IMR-90 (cell line): ENCODE measurements at regions of chr1 and their contacts with region 1.

Region 1: DNA sequence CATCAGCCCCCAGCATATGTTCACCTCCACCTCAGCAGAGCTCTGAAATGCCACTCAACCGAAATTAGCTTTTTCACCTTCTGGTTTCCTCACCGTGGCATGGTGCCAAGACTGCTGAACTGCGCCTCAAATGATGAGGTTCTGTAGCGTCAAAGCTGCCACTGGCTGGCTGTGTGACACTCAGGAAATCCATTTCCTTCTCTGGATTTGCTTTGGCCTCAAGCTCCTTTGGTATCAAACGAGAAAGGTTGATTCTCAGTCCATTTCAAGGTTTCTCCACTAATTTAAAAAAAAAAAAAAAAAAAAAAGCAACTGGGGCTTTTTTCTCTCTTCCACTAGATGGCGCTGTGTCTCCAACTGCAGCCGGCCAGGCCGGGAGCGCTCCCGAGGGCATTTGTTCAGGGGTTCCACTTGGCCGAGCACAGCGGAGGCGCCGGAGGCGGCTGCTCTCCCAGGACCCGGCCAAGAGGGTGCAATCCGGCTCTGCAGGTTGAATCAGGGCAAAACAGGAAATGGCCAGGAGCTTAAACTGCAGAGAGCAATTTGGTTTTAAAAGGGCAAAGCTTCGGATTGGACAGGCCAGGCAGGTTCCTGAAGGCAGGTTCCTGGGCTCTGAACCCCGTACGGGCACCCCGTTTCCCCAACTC is 26.5 kb upstream of the PLA2G2C start:
- DNase-seq: peak; percentile 38
- ATAC-seq: peak; percentile 94
- H3K4me3 ChIP-seq: no peak overlapping the region
- H3K27ac ChIP-seq: no peak overlapping the region
- H3K4me1 ChIP-seq: no peaks in the 10 kb centered on the region
- H3K27me3 ChIP-seq: peaks cover 24% of the 10 kb centered on the region
- CTCF ChIP-seq: peak; percentile 78
- POLR2A ChIP-seq: no peak
- RAD21 ChIP-seq: peak; percentile 77

Region 2: GRCh38 chr1:20361806-20362640 is 149.2 kb after region 1 on chr1:
- CTCF ChIA-PET with region 1: interaction called, 3 read pairs
- POLR2A ChIA-PET with region 1: no interaction called
- dilution Hi-C with region 1: no loop called
- in situ Hi-C with region 1: no loop called
- intact Hi-C with region 1: loop called (anchors 5 kb)
- DNase-seq: peak; percentile 37
- ATAC-seq: peak; percentile 62
- H3K4me3 ChIP-seq: no peak overlapping the region
- H3K27ac ChIP-seq: no peak overlapping the region
- H3K4me1 ChIP-seq: peaks cover 11% of the 10 kb centered on the region; the same call in 1 of the 2 replicates
- H3K27me3 ChIP-seq: peaks cover 44% of the 10 kb centered on the region
- CTCF ChIP-seq: peak; percentile 81
- POLR2A ChIP-seq: no peak
- RAD21 ChIP-seq: peak; percentile 86

Region 3: DNA sequence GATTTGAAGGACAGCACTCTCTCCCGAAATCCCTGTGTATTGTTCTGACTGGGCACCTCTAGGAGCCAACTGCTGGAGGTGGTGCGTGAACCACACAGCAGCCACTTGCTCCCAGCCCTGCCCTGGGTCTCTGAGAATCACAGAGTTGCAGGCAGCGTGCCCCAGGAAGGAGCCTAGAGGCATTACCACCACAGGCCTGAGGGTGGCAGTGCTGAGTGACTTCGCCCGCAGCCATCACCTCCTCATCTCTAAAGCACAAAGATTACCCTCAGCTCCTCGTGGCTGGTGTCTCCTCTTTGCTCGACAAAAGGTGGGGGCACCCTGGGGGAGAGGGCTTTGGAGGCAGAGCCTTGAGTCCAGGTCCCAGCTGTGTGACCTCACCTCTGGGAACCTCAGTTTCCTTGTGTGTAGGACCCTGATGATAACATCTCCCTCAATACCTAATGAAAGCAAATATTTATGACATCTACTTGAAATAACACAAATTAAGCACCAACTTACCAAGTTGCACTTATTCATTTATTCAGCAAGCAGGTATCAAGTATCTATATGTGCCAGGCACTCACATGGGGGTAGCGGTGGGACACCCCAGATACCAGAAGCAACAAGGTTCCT is 164.2 kb after region 1 on chr1:
- CTCF ChIA-PET with region 1: no interaction called
- POLR2A ChIA-PET with region 1: no interaction called
- dilution Hi-C with region 1: no loop called
- in situ Hi-C with region 1: no loop called
- intact Hi-C with region 1: loop called (anchors 5 kb)
- DNase-seq: peak; percentile 35
- ATAC-seq: peak; percentile 92
- H3K4me3 ChIP-seq: no peak overlapping the region
- H3K27ac ChIP-seq: no peak overlapping the region
- H3K4me1 ChIP-seq: peaks cover 10% of the 10 kb centered on the region; the same call in 1 of the 2 replicates
- H3K27me3 ChIP-seq: peaks cover 14% of the 10 kb centered on the region; the same call in 1 of the 2 replicates
- CTCF ChIP-seq: peak; percentile 81
- POLR2A ChIP-seq: no peak
- RAD21 ChIP-seq: peak; percentile 75

Region 4: GRCh38 chr1:20430355-20431175 is 217.8 kb after region 1 on chr1:
- CTCF ChIA-PET with region 1: interaction called, 4 read pairs
- POLR2A ChIA-PET with region 1: no interaction called
- dilution Hi-C with region 1: no loop called
- in situ Hi-C with region 1: no loop called
- intact Hi-C with region 1: loop called (anchors 5 kb)
- DNase-seq: peak; percentile 18
- ATAC-seq: 0 out of 2 replicates have a peak, but pooled peaks have one; percentile 25
- H3K4me3 ChIP-seq: no peak overlapping the region
- H3K27ac ChIP-seq: no peak overlapping the region
- H3K4me1 ChIP-seq: peaks cover 12% of the 10 kb centered on the region
- H3K27me3 ChIP-seq: peaks cover 6% of the 10 kb centered on the region
- CTCF ChIP-seq: peak; percentile 75
- POLR2A ChIP-seq: no peak
- RAD21 ChIP-seq: peak; percentile 85

Region 5: DNA sequence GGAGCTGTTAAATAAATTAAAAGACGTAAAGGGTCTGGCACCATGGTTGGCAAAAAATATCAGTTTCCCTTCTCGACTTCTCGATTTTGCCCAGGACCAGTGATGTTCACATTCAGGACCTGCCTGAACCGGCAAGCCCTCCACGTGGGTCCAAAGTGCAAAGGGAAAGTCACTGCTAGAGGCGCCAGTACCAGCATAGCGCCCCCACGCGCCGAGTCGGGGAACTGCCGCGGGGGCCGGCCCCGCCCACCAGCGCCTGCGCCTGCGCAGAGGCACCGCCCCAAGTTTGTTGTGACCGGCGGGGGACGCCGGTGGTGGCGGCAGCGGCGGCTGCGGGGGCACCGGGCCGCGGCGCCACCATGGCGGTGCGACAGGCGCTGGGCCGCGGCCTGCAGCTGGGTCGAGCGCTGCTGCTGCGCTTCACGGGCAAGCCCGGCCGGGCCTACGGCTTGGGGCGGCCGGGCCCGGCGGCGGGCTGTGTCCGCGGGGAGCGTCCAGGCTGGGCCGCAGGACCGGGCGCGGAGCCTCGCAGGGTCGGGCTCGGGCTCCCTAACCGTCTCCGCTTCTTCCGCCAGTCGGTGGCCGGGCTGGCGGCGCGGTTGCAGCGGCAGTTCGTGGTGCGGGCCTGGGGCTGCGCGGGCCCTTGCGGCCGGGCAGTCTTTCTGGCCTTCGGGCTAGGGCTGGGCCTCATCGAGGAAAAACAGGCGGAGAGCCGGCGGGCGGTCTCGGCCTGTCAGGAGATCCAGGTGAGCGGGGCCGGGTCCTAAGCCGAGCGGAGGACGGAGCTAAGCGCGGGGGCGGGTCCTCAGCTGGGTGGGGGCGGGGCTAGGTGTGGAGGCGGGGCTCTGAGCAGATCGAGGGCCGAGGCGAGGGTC is 420.6 kb after region 1 on chr1 and contains the start of gene PINK1:
- CTCF ChIA-PET with region 1: no interaction called
- POLR2A ChIA-PET with region 1: no interaction called
- dilution Hi-C with region 1: no loop called
- in situ Hi-C with region 1: loop called (anchors 25 kb)
- intact Hi-C with region 1: loop called (anchors 5 kb)
- DNase-seq: peak; percentile 53
- ATAC-seq: peak; percentile 88
- H3K4me3 ChIP-seq: peak within 1 kb of the TSS; percentile 84
- H3K27ac ChIP-seq: peak within 1 kb of the TSS; percentile 66
- H3K4me1 ChIP-seq: no peaks in the 10 kb centered on the region
- H3K27me3 ChIP-seq: 0 out of 2 replicates have a peak, but pooled peaks cover 4% of the 10 kb centered on the region
- CTCF ChIP-seq: peak; percentile 98
- POLR2A ChIP-seq: 0 out of 2 replicates have a peak, but pooled peaks have one; percentile 36
- RAD21 ChIP-seq: peak; percentile 84
- total RNA-seq, gene PINK1: 52.9 and 55.3 TPM in 2 replicates

Region 6: GRCh38 chr1:20640183-20640597 is 427.4 kb after region 1 on chr1:
- CTCF ChIA-PET with region 1: no interaction called
- POLR2A ChIA-PET with region 1: no interaction called
- dilution Hi-C with region 1: no loop called
- in situ Hi-C with region 1: loop called (anchors 25 kb)
- intact Hi-C with region 1: loop called (anchors 5 kb)
- DNase-seq: peak; percentile 54
- ATAC-seq: peak; percentile 76
- H3K4me3 ChIP-seq: no peak overlapping the region
- H3K27ac ChIP-seq: no peak overlapping the region
- H3K4me1 ChIP-seq: no peaks in the 10 kb centered on the region
- H3K27me3 ChIP-seq: no peaks in the 10 kb centered on the region
- CTCF ChIP-seq: peak; percentile 82
- POLR2A ChIP-seq: no peak
- RAD21 ChIP-seq: peak; percentile 86